Gastrocnemius medialis (tissue), 4 donors: ENCODE measurements at regions of chr3 and their contacts with region 1.

Region 1: DNA sequence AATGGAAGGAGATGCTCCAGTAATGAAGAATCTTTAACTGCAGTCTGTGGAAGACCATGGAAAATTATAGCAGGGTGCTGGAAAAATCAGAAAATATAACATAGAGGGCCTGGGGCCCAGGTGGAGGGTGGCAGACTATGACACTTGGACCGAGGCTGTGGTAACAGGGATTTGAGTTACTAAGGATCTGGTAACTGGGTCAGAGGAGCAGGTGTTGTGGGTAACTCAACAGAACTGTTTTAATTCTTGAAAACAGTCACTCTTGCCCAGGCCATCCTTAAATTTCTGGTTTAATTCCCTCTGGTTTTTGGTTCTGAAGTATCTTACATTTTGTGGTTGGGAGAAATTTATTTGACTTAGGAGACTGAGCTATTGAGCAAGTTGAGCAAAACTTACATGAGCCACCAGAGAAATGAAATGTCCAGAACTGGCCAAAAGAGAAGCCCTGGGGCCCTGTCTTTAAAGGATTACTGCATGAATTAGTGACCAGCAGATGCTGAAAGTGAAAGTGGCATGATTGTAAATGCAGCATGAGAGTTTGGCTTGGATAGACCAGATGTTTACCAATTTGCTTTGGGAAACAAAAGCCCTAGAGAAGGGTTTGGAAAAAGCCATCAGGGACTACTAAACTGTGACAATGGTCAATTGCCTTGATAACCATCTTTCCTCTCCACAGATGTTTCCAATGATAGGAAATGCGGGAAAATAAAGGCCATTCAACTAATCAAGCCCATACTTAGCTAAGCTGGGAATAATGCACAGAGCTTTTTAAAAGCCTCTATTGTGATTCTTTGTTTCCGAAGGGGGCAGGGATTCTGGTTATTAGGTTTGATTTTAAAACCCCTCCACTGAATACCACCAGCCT is 374.9 kb upstream of the TGFBR2 start:
- DNase-seq: no peak
- ATAC-seq: peak; percentile 38 to 43
- H3K4me3 ChIP-seq: no peak overlapping the region
- H3K27ac ChIP-seq: peak overlapping the region; percentile 48 to 56 (median 54)
- H3K4me1 ChIP-seq: peaks cover 16 to 26% of the 10 kb centered on the region in 2 donors
- H3K27me3 ChIP-seq: no peaks in the 10 kb centered on the region
- CTCF ChIP-seq: no peak
- POLR2A ChIP-seq: no peak

Region 2: DNA sequence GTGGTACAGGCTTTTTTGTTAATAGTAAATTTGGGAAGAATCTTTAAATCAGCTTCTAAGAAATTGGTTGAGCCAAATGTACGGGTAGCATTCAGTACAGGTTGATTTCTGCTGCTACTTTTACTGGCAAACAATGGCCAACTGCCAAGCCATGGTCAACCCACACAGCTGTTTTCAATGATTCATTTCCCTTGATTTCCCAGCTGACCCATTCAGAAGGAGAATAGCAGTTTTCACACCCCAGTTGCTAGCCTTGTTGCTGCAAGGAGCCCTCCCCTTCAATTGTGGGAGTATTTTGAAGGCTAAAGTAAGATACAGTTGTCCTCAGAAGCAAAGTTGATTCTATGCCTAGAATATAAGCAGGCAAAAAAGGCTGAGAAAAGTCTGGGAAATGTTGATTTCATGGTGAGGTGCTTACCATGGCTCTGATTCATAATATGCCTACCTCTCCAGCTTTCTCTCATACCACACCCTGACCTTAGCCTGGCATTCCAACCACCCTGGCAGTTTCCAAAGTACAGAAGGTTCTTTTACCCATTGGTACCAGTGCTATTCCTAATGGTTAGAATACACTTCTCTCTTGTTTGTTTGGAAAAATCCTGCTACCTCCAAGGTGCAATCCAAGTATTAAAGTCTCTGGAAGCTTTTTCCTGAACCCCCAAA is 54.6 kb after region 1 on chr3:
- in situ Hi-C with region 1: no loop called
- intact Hi-C with region 1: loop called (anchors 5 kb)
- DNase-seq: peak; percentile 65
- ATAC-seq: peak; percentile 88 to 95
- H3K4me3 ChIP-seq: no peak overlapping the region
- H3K27ac ChIP-seq: peak overlapping the region; percentile 39 to 73 (median 51)
- H3K4me1 ChIP-seq: peaks cover 12 to 38% of the 10 kb centered on the region in 2 donors
- H3K27me3 ChIP-seq: no peaks in the 10 kb centered on the region
- CTCF ChIP-seq: no peak
- POLR2A ChIP-seq: no peak